K562 (cell line): ENCODE measurements at regions of chr7 and their contacts with region 1.

Region 1: GRCh38 chr7:45259966-45260646 is 102.5 kb downstream of the RAMP3 start:
- DNase-seq: peak; percentile 70 to 81 (median 76)
- ATAC-seq: peak; percentile 98
- H3K4me3 ChIP-seq: no peak overlapping the region
- H3K27ac ChIP-seq: no peak overlapping the region
- H3K4me1 ChIP-seq: peaks cover 0 to 8% of the 10 kb centered on the region in 2 experiments; a peak in 2 of 5 replicates
- H3K27me3 ChIP-seq: peaks cover 0 to 37% of the 10 kb centered on the region in 2 experiments; a peak in 4 of 5 replicates
- CTCF ChIP-seq: peak; percentile 93 to 98 (median 95)
- EP300 ChIP-seq: no peak
- POLR2A ChIP-seq: no peak
- RAD21 ChIP-seq: peak; percentile 95 to 96

Region 2: DNA sequence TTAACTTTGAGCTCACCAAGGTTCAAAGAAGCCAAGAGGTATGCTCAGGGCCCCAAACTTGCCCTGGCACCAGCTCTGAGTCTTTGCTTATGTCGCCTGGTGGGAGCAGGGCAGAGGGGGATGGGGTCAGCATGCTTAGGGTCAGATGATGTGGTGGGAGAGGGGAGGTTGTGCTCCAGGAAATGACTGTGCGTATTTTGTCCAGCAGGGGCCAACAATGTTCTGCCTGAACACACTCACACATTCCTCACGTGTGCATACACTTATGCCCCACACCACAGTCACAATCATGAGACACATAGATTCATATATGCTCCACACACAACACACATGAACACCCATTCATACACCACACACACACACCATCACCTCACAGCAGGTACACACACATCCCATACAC is 106.9 kb before region 1 on chr7:
- CTCF ChIA-PET with region 1: interaction called, 56 read pairs
- POLR2A ChIA-PET with region 1: no interaction called
- in situ Hi-C with region 1: loop called (anchors 5 kb)
- intact Hi-C with region 1: loop called (anchors 1 kb)
- DNase-seq: peak; percentile 30 to 48 (median 41)
- ATAC-seq: 0 out of 3 replicates have a peak, but pooled peaks have one; percentile 5
- H3K4me3 ChIP-seq: no peak overlapping the region
- H3K27ac ChIP-seq: no peak overlapping the region
- H3K4me1 ChIP-seq: peaks cover 4 to 14% of the 10 kb centered on the region in 2 experiments; a peak in 2 of 5 replicates
- H3K27me3 ChIP-seq: peaks cover 16 to 30% of the 10 kb centered on the region in 2 experiments; a peak in 4 of 5 replicates
- CTCF ChIP-seq: 0 out of 6 replicates have a peak, but pooled peaks of 1 of the 3 experiments have one; percentile 8
- EP300 ChIP-seq: no peak
- POLR2A ChIP-seq: no peak
- RAD21 ChIP-seq: peak in 1 of 2 experiments; percentile 13; a peak in 1 of 4 replicates

Region 3: DNA sequence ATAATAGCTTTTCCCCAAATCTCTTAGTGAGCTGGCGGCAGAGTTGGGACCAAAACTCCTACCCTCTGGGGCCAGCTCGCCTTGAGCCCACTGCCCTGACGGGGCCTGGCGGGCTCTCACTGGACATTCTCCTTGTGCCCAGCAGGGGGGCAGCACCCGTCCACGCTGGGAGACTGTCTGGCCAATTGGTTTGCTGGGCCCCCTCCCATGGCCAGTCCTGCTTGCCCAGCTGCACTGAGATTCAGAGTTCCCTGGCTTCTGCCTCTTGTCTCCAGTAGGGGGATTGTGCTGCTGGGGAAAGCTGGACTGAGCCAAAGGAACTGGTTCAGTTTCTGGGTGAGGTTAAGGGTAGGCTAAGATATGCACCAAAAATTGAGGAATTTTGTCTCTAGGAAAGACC is 42.7 kb before region 1 on chr7:
- CTCF ChIA-PET with region 1: interaction called, 3 read pairs
- POLR2A ChIA-PET with region 1: no interaction called
- in situ Hi-C with region 1: no loop called
- intact Hi-C with region 1: loop called (anchors 1 kb)
- DNase-seq: peak; percentile 37 to 50 (median 44)
- ATAC-seq: peak; percentile 93
- H3K4me3 ChIP-seq: no peak overlapping the region
- H3K27ac ChIP-seq: no peak overlapping the region
- H3K4me1 ChIP-seq: peaks cover 0 to 3% of the 10 kb centered on the region in 2 experiments; a peak in 1 of 5 replicates
- H3K27me3 ChIP-seq: peaks cover 14 to 36% of the 10 kb centered on the region in 2 experiments
- CTCF ChIP-seq: peak; percentile 55 to 72 (median 58)
- EP300 ChIP-seq: no peak
- POLR2A ChIP-seq: no peak
- RAD21 ChIP-seq: 0 out of 4 replicates have a peak, but pooled peaks of 1 of the 2 experiments have one; percentile 37